MCF 10A (cell line): ENCODE measurements at regions of chr14 and their contacts with region 1.

Region 1: GRCh38 chr14:20489093-20489994 is 16.0 kb upstream of the RNASE10 start:
- DNase-seq: peak; percentile 53
- H3K4me3 Mint-ChIP-seq: no peak overlapping the region
- H3K27ac Mint-ChIP-seq: peak overlapping the region; percentile 1
- H3K4me1 Mint-ChIP-seq: peaks cover 26% of the 10 kb centered on the region
- H3K27me3 Mint-ChIP-seq: no peaks in the 10 kb centered on the region
- CTCF ChIP-seq: no peak

Region 2: DNA sequence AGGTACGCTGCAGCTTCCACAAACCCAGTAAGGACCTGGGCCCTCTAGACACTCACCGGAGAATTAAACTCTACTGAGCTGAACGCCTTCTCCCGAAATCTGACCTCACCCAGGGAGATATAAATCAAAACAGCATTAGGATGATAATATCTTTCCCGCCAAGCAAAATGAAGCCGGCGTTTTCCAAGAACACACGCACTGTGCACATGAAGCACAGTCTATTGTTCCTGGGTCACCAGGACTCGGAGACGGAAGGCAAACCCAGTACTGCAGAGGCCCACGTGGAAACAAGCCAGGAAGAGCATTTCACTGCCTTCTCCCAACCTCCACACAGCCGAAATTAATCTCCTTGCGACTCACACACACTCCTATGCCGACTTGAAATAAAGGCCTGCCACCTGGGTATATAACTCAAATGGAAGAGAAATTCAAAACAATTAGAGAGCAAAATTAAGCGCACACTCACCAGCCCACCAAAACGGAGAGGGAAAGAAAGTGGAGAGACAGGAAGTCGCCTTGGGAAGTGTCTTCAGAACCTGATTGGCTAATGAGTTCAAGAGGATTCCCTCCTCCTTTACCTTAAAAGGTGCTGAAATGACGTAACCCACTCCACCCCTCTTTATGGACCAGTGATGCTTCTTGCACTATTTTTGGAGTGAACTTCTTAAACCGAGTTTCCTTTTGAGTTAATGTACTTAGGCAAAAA is 156.4 kb before region 1 on chr14 and contains the start of gene CCNB1IP1:
- CTCF ChIA-PET with region 1: no interaction called
- POLR2A ChIA-PET with region 1: no interaction called
- intact Hi-C with region 1: no loop called
- DNase-seq: peak; percentile 94
- H3K4me3 Mint-ChIP-seq: peak within 1 kb of the TSS; percentile 93
- H3K27ac Mint-ChIP-seq: peak within 1 kb of the TSS; percentile 94
- H3K4me1 Mint-ChIP-seq: peaks cover 25% of the 10 kb centered on the region
- H3K27me3 Mint-ChIP-seq: no peaks in the 10 kb centered on the region
- CTCF ChIP-seq: no peak
- total RNA-seq, gene CCNB1IP1: 105 and 108 TPM in 2 replicates

Region 3: DNA sequence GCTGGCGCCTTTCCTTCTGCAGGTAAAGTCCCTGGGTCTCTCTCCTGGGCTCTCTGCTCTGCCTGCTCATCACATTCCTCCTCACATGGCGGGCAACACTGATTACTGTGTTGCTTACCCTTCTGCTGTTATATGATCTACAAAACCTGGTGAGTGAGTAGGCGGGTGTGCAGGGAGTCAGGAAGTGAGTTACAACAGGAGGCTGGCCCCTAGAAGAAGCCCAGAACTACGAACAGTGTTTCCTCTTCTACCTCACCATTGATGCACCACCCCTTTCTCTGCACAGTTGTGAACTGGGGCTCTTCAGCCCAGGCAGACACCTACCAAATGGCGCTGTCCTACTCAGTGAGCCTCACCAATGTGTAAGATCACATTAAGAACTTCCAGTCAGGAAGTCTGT is 48.5 kb before region 1 on chr14:
- CTCF ChIA-PET with region 1: no interaction called
- POLR2A ChIA-PET with region 1: no interaction called
- intact Hi-C with region 1: no loop called
- DNase-seq: no peak
- H3K4me3 Mint-ChIP-seq: no peak overlapping the region
- H3K27ac Mint-ChIP-seq: no peak overlapping the region
- H3K4me1 Mint-ChIP-seq: no peaks in the 10 kb centered on the region
- H3K27me3 Mint-ChIP-seq: no peaks in the 10 kb centered on the region
- CTCF ChIP-seq: no peak

Region 4: GRCh38 chr14:20606190-20606901 is 117.0 kb after region 1 on chr14:
- CTCF ChIA-PET with region 1: interaction called, 15 read pairs
- POLR2A ChIA-PET with region 1: no interaction called
- intact Hi-C with region 1: no loop called
- DNase-seq: peak; percentile 60
- H3K4me3 Mint-ChIP-seq: no peak overlapping the region
- H3K27ac Mint-ChIP-seq: no peak overlapping the region
- H3K4me1 Mint-ChIP-seq: peaks cover 9% of the 10 kb centered on the region
- H3K27me3 Mint-ChIP-seq: no peaks in the 10 kb centered on the region
- CTCF ChIP-seq: peak; percentile 54